Activated naive CD4-positive, alpha-beta T cell treated with anti-CD3 and anti-CD28 coated beads, Interleukin-2, amount 10 ng/mL, durations not matched to agents 7 days and 5 days (primary cell): ENCODE measurements at regions of chr4 and their contacts with region 1.

Region 1: GRCh38 chr4:183261953-183262775 is 57.9 kb downstream of the CLDN22 start:
- DNase-seq: peak; percentile 86
- H3K4me3 Mint-ChIP-seq: no peak overlapping the region
- H3K27ac Mint-ChIP-seq: peak overlapping the region; percentile 34
- H3K4me1 Mint-ChIP-seq: peaks cover 6% of the 10 kb centered on the region
- H3K27me3 Mint-ChIP-seq: no peaks in the 10 kb centered on the region

Region 2: GRCh38 chr4:182925298-182925738 is 336.8 kb before region 1 on chr4:
- CTCF ChIA-PET with region 1: interaction called, 10 read pairs
- DNase-seq: peak; percentile 73
- H3K4me3 Mint-ChIP-seq: no peak overlapping the region
- H3K27ac Mint-ChIP-seq: no peak overlapping the region
- H3K4me1 Mint-ChIP-seq: no peaks in the 10 kb centered on the region
- H3K27me3 Mint-ChIP-seq: peaks cover 28% of the 10 kb centered on the region

Region 3: DNA sequence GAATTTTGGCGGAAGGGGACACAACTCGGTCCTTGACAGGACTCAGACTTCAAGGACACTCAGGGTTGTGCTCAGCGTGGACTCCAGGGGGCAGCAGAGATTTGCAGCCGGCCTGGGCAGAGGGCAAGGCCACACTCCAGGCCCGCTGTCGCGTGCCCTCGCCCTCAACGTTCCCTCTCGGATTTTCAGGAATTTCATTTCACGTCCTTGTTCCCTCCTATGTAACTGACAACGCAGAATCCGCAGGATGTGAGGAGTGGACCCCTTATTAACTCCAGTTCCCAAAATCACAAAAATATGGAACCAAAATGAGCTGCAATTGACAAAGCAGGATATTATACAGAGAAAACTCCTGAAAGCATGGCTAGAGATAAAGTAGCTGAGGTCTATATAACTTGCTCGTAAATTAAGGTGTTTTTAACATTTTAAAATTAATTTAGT is 323.9 kb before region 1 on chr4:
- CTCF ChIA-PET with region 1: interaction called, 27 read pairs
- DNase-seq: peak; percentile 73
- H3K4me3 Mint-ChIP-seq: no peak overlapping the region
- H3K27ac Mint-ChIP-seq: no peak overlapping the region
- H3K4me1 Mint-ChIP-seq: no peaks in the 10 kb centered on the region
- H3K27me3 Mint-ChIP-seq: peaks cover 26% of the 10 kb centered on the region

Region 4: GRCh38 chr4:182967403-182967802 is 294.8 kb before region 1 on chr4:
- CTCF ChIA-PET with region 1: no interaction called
- DNase-seq: no peak
- H3K4me3 Mint-ChIP-seq: no peak overlapping the region
- H3K27ac Mint-ChIP-seq: no peak overlapping the region
- H3K4me1 Mint-ChIP-seq: no peaks in the 10 kb centered on the region
- H3K27me3 Mint-ChIP-seq: peaks cover 23% of the 10 kb centered on the region

Region 5: GRCh38 chr4:183074296-183074990 is 187.7 kb before region 1 on chr4:
- CTCF ChIA-PET with region 1: interaction called, 111 read pairs
- DNase-seq: no peak
- H3K4me3 Mint-ChIP-seq: no peak overlapping the region
- H3K27ac Mint-ChIP-seq: no peak overlapping the region
- H3K4me1 Mint-ChIP-seq: no peaks in the 10 kb centered on the region
- H3K27me3 Mint-ChIP-seq: peaks cover 15% of the 10 kb centered on the region

Region 6: DNA sequence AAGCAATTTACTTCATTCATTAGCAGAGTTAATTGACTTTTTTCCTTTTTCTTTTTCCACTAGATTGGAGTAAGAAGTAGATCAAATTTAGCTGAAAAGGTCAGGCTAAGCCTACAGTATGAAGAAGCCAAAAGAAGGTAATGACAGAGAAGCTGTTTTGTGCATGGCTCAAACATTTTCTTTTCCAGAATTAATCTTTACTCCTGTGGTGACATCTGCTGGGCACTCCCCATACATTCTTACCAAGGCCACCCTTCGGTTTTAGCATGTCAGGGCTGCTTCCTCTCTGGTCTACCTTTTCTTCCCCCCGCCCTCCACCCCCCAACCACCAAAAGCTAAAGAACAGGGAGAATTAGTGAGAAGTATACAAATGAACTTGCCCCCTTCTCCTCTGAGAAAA is 12.3 kb before region 1 on chr4:
- CTCF ChIA-PET with region 1: interaction called, 30 read pairs
- DNase-seq: peak; percentile 34
- H3K4me3 Mint-ChIP-seq: no peak overlapping the region
- H3K27ac Mint-ChIP-seq: no peak overlapping the region
- H3K4me1 Mint-ChIP-seq: no peaks in the 10 kb centered on the region
- H3K27me3 Mint-ChIP-seq: no peaks in the 10 kb centered on the region

Region 7: DNA sequence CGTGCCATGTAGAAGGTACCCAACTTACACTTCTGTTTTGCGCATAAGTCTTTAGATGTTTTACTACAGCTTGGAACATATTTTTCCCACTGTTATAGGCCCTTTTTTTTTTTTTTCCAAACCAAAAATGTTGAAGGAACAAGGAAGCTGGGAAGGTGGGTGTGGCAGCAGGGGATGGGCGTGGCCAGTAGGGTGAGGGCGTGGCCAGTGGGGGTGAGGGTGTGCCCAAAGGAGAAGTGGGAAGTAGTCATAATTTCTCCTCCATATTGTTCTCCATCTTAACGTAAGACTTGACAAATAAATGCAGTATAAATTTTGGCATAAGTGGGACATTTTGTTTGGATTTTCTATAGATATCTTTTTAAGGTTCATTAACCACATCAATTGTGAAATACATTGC is 27.5 kb after region 1 on chr4:
- CTCF ChIA-PET with region 1: no interaction called
- DNase-seq: no peak
- H3K4me3 Mint-ChIP-seq: no peak overlapping the region
- H3K27ac Mint-ChIP-seq: no peak overlapping the region
- H3K4me1 Mint-ChIP-seq: no peaks in the 10 kb centered on the region
- H3K27me3 Mint-ChIP-seq: no peaks in the 10 kb centered on the region

Region 8: DNA sequence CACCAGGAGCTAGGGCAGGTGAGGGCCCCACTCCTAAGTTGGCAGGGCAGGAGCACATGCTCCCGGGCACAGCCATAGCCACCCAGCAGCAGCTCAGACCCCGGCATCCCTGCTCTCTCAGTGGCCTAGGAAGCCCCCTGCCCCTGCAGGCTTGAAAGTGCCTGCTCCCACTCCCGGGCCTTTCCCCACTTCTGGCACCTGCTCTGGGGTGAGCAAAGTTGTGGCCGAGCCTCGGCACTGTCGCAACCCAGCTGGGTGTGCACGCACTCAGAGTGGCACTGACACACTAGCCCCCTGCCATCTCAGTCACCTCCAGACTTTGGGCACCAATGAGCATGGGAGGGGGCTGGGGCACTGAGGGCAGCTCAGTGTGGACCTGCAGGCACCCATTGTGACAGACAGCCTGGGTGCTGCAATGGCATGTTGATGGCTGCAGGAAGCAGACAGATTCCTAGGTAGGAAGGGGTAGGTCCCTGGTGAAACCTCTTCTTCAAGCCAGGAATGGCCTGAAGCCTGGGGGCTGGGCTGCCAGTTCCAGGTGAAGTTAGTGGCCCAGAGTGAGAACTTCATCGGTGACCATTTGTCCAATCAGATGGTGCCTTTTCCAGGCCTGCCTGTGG is 121.6 kb after region 1 on chr4:
- CTCF ChIA-PET with region 1: no interaction called
- DNase-seq: no peak
- H3K4me3 Mint-ChIP-seq: no peak overlapping the region
- H3K27ac Mint-ChIP-seq: no peak overlapping the region
- H3K4me1 Mint-ChIP-seq: no peaks in the 10 kb centered on the region
- H3K27me3 Mint-ChIP-seq: peaks cover 15% of the 10 kb centered on the region